Activated CD8-positive, alpha-beta T cell treated with anti-CD3 and anti-CD28 coated beads, Interleukin-2, amount 10 ng/mL, durations not matched to agents 7 days and 5 days (primary cell): ENCODE measurements at regions of chr2 and their contacts with region 1.

Region 1: GRCh38 chr2:237968121-237968862 is 1.5 kb downstream of the UBE2F start:
- DNase-seq: peak; percentile 78
- ATAC-seq: peak; percentile 49
- H3K4me3 Mint-ChIP-seq: peak overlapping the region; percentile 79
- H3K27ac Mint-ChIP-seq: peak overlapping the region; percentile 81
- H3K4me1 Mint-ChIP-seq: peaks cover 46% of the 10 kb centered on the region
- H3K27me3 Mint-ChIP-seq: no peaks in the 10 kb centered on the region

Region 2: DNA sequence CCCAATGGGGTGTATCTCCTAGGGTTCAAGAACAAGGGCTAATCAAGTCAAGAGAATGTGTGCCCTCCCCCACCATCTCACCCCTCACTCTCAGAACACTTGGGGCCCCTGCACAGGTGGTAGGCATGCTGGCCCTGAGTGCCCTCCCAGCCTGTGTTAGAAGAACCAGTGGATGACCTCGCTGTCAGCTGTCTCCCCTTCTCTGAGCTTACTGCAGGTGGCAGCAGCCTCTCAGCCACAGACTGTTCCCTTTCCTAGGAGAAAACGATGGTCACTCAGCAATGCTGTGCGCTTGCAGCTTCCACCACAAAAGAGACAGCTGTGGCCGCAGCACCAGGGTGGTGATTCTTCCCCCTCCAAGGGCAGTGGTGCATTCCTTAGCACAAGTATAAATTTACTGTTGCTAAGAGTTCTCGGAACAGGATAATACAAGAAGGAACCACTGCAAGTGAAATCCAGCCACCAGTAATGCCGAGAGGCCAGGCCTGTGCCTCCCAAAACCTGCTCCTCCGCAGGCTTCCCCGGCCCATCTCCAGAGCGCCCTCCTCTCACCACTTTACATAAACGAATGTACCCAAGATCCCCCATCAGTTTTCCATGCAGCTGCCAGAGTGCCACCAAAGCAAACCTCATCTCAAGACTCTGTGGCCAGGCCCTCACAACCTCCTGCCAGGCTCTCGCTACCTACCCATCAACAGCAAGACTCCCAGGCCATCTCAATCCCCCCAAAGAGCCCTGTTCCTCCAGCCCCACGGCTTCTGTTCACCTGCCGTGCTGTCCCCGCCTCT is 109.8 kb before region 1 on chr2:
- CTCF ChIA-PET with region 1: interaction called, 14 read pairs
- POLR2A ChIA-PET with region 1: no interaction called
- DNase-seq: peak; percentile 71
- ATAC-seq: peak; percentile 86
- H3K4me3 Mint-ChIP-seq: peak overlapping the region; percentile 64
- H3K27ac Mint-ChIP-seq: no peak overlapping the region
- H3K4me1 Mint-ChIP-seq: peaks cover 20% of the 10 kb centered on the region
- H3K27me3 Mint-ChIP-seq: peaks cover 56% of the 10 kb centered on the region

Region 3: DNA sequence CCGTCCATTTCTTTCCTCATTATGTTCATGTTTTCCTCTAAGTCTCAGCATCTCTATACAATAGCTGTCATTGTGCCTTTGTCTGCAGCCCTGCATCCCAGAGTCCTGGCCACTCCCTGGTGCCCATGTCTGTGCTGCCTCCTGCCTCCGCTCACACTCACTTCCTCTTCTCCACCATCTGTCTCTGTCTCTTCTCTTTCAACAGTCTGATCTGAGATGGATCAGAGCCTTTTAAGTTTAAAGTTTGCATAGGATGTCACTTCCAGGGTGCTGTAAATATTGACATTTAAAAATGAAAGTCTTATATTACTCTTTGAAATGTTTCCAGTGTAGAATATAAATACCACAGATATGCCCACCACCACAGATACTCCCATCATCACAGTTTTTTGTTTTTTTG is 41.3 kb after region 1 on chr2:
- CTCF ChIA-PET with region 1: interaction called, 11 read pairs
- POLR2A ChIA-PET with region 1: no interaction called
- DNase-seq: no peak
- ATAC-seq: peak; percentile 39
- H3K4me3 Mint-ChIP-seq: no peak overlapping the region
- H3K27ac Mint-ChIP-seq: no peak overlapping the region
- H3K4me1 Mint-ChIP-seq: peaks cover 34% of the 10 kb centered on the region
- H3K27me3 Mint-ChIP-seq: no peaks in the 10 kb centered on the region